ENCODE measurements at regions of chr10 and their contacts with region 1.

Region 1: DNA sequence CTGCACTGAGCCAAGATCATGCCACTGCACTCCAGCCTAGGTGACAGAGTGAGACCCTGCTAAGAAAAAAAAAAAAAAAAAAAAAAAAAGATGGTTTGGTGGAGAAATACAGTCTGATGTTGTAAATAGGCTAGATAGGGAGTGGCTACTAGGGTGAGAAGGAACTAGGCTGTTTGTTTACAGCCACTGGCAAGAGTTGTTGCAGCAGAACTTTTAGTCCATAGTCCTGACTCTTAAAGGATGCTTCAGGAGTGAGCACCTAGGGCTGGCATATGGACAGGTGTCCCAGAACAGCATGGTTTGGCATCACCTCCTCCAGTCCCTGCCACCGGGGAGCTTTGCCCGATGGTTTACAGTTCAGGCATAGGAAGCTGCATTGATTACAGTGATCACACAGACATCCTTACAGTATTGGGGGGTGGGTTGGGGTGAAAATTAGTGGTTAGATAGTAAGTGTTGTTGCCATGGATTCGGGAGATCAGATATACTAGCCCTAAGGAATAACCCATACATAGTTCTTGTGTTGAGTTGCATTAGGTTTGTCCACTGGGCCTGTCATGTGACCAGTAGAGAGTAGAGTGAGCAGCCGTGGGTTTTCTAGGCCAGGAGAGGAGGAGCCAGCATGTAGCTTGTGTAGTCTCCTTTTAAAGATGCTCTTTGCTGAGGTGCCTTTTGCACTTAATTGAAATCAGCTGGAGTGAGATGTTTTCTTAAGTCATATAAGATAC is 35.9 kb downstream of the ZRANB1 start:
- DNase-seq: no peak
- H3K4me3 ChIP-seq: no peak overlapping the region
- H3K27ac ChIP-seq: no peak overlapping the region
- H3K4me1 ChIP-seq: no peaks in the 10 kb centered on the region
- H3K27me3 ChIP-seq: no peaks in the 10 kb centered on the region
- CTCF ChIP-seq: no peak

Region 2: DNA sequence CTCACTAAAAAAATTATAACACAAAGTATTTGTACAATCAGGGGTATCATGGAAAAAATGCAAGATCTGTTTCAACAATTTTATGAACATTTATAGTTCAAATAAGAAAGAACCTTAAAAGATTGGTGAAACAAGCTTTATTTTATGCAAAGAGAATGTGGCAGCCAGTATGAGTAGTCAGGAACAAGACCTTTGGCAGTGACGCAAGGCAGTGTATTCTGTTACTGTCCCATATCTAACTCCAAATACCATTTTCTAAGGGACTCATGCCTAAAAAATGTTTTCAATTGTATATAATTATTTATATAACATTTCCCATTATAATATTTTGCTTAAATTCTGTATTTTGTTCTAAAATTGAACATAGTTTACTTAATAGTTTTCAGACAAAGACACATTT is 214.5 kb before region 1 on chr10:
- CTCF ChIA-PET with region 1: no interaction called
- POLR2A ChIA-PET with region 1: interaction called, 13 read pairs
- intact Hi-C with region 1: no loop called
- DNase-seq: no peak
- H3K4me3 ChIP-seq: no peak overlapping the region
- H3K27ac ChIP-seq: no peak overlapping the region
- H3K4me1 ChIP-seq: no peaks in the 10 kb centered on the region
- H3K27me3 ChIP-seq: no peaks in the 10 kb centered on the region
- CTCF ChIP-seq: no peak

Region 3: DNA sequence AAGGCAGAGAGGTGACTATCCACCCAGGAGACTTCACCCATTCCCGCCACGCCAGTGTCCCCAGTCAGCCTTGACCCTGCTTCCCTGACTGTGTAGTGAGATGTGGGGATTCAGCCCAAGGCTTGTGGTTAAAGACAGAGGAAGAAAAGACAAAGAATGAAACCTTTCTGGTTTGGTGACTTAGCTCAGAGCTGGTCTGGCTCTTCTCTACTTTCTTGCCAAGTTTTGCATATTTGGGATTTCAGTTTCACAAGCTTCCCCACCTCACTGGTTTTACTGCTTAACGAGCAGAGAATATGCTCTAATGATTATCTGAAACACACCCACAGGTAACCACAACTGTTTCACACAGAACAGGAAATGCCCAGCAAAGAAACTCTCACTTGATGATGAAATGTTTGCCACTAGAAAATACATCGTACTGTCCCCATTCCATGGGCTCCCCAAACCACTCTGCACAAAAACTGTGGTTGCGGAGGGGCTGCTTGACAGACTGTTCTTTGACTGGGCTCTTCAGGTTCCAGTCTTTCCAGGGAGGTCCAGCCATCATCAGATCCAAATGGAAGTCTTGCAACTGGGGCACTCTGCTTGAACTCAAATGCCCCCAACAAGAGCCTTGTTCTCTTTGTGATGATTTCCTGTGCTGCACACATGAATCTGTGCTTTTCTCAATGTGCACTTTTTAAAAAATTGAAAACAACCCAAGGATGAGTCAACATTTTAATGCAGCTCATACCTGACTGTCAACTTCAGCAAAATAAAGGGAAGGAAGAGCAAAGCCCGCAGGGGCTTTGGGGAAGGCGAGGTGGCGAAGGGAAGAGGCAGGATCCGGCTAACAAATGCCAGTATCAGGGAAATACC is 87.1 kb after region 1 on chr10:
- CTCF ChIA-PET with region 1: no interaction called
- POLR2A ChIA-PET with region 1: no interaction called
- intact Hi-C with region 1: no loop called
- DNase-seq: peak; percentile 70 to 98
- H3K4me3 ChIP-seq: peak overlapping the region; percentile 30; the same call in 1 of the 2 replicates
- H3K27ac ChIP-seq: peak overlapping the region; percentile 96
- H3K4me1 ChIP-seq: peaks cover 54% of the 10 kb centered on the region
- H3K27me3 ChIP-seq: no peaks in the 10 kb centered on the region
- CTCF ChIP-seq: no peak